ENCODE measurements at regions of chr2 and their contacts with region 1.

Region 1: DNA sequence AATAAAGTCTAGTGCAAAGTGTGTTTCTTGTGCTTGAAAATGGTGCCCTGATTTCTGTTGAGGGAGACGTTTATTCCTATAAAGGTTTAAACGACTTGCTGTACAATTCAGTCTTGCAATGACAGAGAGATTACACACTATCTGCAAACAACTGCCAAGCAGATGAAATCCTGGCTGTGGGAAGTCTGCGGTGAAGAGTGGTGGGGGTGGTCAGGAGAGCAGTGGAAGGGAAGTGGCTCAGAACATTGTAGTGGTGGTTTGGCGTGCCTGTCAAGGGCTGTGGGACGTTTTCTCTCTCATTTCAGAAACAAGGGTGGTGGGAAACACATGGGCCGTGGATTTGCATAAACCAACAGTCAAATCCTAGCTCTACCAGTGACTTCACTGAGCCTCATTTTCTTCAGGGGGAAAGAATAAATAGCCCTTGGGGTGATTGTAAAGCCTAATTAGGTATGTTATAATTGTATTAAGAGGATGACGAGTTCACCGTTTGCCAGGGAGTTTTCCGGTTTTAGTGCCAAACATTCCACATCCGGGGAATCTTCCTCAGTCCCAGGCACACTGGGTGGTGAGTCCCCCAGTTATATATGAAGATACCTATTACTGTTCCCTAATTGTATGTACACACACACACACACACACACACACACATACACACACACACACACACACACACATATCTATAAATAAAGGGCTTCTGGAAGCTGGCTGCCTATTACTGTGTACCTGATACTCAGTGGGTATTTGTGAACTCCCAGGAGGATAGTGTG is 115.0 kb downstream of the SPTBN1 start:
- DNase-seq: peak in 3 of 4 experiments; percentile 26 to 83 (median 75)
- ATAC-seq: peak; percentile 75
- H3K4me3 ChIP-seq: no peak overlapping the region
- H3K27ac ChIP-seq: peak overlapping the region; percentile 4; the same call in 1 of the 3 replicates
- H3K4me1 ChIP-seq: peaks cover 23 to 73% of the 10 kb centered on the region in 2 experiments
- H3K27me3 ChIP-seq: no peaks in the 10 kb centered on the region
- CTCF ChIP-seq: no peak
- EP300 ChIP-seq: peak; percentile 90
- POLR2A ChIP-seq: no peak
- RAD21 ChIP-seq: peak in 1 of 2 experiments; percentile 26; a peak in 2 of 4 replicates

Region 2: DNA sequence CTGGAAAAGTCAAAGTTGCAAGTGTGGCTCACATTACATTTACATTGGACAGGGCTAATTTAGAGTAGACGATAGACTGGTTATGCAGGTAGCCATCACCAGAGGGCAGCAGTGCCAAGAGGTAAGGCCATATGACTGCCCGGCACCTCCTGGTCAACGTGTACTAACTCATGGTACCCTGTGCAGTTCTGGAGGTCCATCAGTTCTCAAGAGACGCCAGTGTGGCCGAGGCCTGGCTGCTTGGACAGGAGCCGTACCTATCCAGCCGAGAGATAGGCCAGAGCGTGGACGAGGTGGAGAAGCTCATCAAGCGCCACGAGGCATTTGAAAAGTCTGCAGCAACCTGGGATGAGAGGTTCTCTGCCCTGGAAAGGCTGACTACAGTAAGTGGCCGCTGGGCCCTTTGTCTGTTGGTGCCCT is 86.6 kb after region 1 on chr2:
- CTCF ChIA-PET with region 1: no interaction called
- POLR2A ChIA-PET with region 1: no interaction called
- in situ Hi-C with region 1: no loop called
- intact Hi-C with region 1: loop called (anchors 5 kb)
- DNase-seq: peak; percentile 47 to 62 (median 59)
- ATAC-seq: peak; percentile 94
- H3K4me3 ChIP-seq: no peak overlapping the region
- H3K27ac ChIP-seq: no peak overlapping the region
- H3K4me1 ChIP-seq: no peaks in the 10 kb centered on the region
- H3K27me3 ChIP-seq: no peaks in the 10 kb centered on the region
- CTCF ChIP-seq: peak; percentile 53 to 69 (median 66)
- EP300 ChIP-seq: no peak
- POLR2A ChIP-seq: no peak
- RAD21 ChIP-seq: peak; percentile 45 to 49